Ascending aorta (tissue), 2 donors: ENCODE measurements at regions of chr14 and their contacts with region 1.

Region 1: GRCh38 chr14:93206793-93207467 is at the starts of genes GON7 and UBR7:
- DNase-seq: peak; percentile 78 to 97
- H3K4me3 ChIP-seq: peak within 1 kb of the TSS; percentile 65 to 72
- H3K27ac ChIP-seq: peak within 1 kb of the TSS; percentile 85 to 86
- H3K4me1 ChIP-seq: peaks cover 8 to 11% of the 10 kb centered on the region in 2 donors
- H3K27me3 ChIP-seq: no peaks in the 10 kb centered on the region
- CTCF ChIP-seq: peak in 2 of 3 experiments; percentile 5 to 31
- total RNA-seq, gene GON7: 4.6 TPM
- total RNA-seq, gene UBR7: 8.3 TPM

Region 2: GRCh38 chr14:93150227-93151206 is 56.4 kb before region 1 on chr14:
- intact Hi-C with region 1: no loop called
- DNase-seq: no peak
- H3K4me3 ChIP-seq: no peak overlapping the region
- H3K27ac ChIP-seq: no peak overlapping the region
- H3K4me1 ChIP-seq: no peaks in the 10 kb centered on the region
- H3K27me3 ChIP-seq: no peaks in the 10 kb centered on the region
- CTCF ChIP-seq: no peak

Region 3: DNA sequence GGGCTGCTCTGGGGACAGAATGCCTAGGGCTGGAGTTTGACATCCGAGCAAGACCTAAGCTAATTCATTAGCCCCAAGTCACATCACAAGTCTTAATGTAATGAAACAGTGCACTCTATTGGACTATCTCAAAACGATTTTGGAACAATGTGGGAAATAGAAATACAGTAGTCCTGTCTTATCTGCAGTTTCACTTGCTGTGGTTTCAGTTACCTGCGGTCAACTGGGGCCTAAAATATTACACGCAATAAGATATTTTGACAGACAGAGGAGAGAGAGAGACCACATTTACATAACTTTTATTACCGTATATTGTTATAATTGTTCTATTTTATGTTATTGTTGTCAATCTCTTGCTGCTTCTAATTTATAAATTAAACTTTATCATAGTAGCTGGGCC is 43.4 kb before region 1 on chr14:
- intact Hi-C with region 1: no loop called
- DNase-seq: no peak
- H3K4me3 ChIP-seq: no peak overlapping the region
- H3K27ac ChIP-seq: no peak overlapping the region
- H3K4me1 ChIP-seq: no peaks in the 10 kb centered on the region
- H3K27me3 ChIP-seq: no peaks in the 10 kb centered on the region
- CTCF ChIP-seq: no peak

Region 4: DNA sequence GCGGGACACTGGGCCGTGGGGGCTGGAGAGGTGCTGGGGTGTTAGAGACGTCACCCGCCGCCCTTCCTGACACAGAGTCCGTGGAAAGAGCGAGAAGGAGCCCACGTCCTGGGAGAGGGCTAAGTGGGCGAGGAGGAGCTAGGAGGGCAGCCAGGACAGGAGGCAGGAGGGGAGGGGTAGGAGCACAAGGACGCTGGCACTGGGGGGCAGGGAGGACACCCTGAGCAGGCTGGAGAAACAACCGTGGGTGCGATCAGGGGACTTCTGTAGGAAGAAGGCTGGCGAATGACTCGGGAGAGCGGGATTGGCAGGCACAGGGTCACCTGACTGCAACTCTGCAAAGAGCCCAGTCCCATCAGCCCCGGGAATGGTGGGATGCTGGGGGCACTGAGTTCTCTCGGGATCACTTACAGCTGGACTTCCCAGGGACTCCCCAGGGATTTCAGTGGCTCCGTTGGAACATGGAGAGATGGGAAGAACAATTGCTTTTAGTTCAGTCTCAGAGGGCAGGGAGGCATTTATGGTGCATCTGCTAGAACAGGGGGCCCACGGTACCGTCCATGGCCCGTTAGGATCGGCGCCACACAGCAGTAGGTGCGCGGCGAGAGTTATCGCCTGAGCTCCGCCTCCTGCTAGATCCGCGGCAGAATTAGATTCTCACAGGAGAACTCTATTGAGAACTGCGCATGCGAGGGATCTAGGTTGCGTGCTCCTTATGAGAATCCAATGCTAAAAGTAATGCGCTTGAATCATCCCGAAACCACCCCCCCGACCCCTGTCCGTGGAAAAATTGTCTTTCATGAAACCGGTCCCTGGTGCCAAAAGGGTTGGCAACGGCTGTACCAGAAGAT is 24.4 kb after region 1 on chr14:
- intact Hi-C with region 1: no loop called
- DNase-seq: no peak
- H3K4me3 ChIP-seq: peak overlapping the region; percentile 50 to 59
- H3K27ac ChIP-seq: no peak overlapping the region
- H3K4me1 ChIP-seq: no peaks in the 10 kb centered on the region
- H3K27me3 ChIP-seq: no peaks in the 10 kb centered on the region
- CTCF ChIP-seq: no peak

Region 5: GRCh38 chr14:93319958-93320357 is 113.0 kb after region 1 on chr14:
- intact Hi-C with region 1: no loop called
- DNase-seq: no peak
- H3K4me3 ChIP-seq: no peak overlapping the region
- H3K27ac ChIP-seq: no peak overlapping the region
- H3K4me1 ChIP-seq: peaks cover 0 to 11% of the 10 kb centered on the region in 2 donors
- H3K27me3 ChIP-seq: no peaks in the 10 kb centered on the region
- CTCF ChIP-seq: no peak

Region 6: DNA sequence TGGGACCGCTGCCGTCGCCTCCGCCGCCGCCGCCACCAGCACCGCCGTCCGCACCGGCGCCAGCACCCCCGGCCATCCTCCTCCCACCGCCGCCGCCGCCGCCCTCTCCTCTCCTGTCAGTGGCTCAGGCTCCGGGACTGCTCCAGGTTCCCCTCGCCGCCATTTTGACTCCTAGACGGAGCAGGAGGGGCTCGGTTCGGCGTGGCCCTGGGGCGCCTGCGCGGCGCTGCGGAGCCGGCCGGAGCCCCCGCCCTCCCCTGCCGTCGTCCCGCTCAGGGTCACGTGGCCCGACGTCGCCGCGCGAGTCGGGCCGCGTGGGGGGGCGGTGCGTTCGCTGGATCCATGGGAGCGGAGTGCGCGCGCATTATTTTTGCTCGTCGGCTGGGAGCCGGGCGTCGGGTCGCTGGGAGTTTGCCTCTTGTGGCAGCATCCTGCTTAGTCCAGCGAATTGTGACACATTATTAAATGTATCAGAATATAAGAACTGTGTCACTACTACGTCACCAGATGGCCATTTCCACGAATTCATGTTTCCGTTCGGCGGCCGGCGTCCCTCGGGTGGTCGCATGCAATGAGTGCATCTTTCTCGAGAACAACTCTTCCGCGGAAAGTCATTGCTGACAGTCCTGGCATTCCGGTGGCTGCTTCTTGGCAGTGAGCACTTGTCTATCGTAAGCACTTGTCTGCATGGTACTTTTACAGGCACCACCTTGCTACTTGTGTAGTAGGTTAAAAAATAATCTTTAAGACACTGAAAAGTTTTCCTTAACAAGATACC is 126.1 kb after region 1 on chr14 and contains the start of gene BTBD7:
- intact Hi-C with region 1: loop called (anchors 1 kb)
- DNase-seq: peak; percentile 73 to 97
- H3K4me3 ChIP-seq: peak within 1 kb of the TSS; percentile 85 to 91
- H3K27ac ChIP-seq: peak within 1 kb of the TSS; percentile 86 to 97
- H3K4me1 ChIP-seq: peaks cover 0 to 25% of the 10 kb centered on the region in 2 donors
- H3K27me3 ChIP-seq: no peaks in the 10 kb centered on the region
- CTCF ChIP-seq: peak in 1 of 3 experiments; percentile 9
- total RNA-seq, gene BTBD7: 17.2 TPM